MCF 10A (cell line): ENCODE measurements at regions of chr9 and their contacts with region 1.

Region 1: DNA sequence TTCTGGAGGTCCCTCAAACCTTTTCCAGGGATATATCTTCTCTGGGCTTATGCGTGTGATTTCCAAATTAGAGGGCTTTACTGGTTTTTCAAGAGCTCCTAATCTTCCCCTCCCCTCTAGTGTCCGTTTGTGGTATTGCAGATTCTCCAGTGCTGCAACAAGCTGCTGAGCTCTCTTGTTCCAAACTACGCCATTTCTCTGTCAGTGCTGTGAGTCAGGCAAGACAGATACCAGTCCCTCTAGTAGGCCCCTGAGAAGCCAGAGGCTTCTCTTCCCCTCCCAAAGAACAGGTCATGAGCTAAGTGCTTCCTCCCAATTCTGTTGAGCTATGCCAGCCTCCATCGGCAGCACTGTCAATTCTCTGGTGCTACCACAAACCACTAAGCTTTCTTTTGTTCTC is 149.5 kb downstream of the FANCC start:
- DNase-seq: peak; percentile 89
- H3K4me3 Mint-ChIP-seq: no peak overlapping the region
- H3K27ac Mint-ChIP-seq: no peak overlapping the region
- H3K4me1 Mint-ChIP-seq: peaks cover 13% of the 10 kb centered on the region
- H3K27me3 Mint-ChIP-seq: no peaks in the 10 kb centered on the region
- CTCF ChIP-seq: peak; percentile 93

Region 2: GRCh38 chr9:94672811-94673487 is 495.0 kb before region 1 on chr9:
- CTCF ChIA-PET with region 1: interaction called, 14 read pairs
- POLR2A ChIA-PET with region 1: no interaction called
- intact Hi-C with region 1: loop called (anchors 1 kb)
- DNase-seq: peak; percentile 38
- H3K4me3 Mint-ChIP-seq: no peak overlapping the region
- H3K27ac Mint-ChIP-seq: peak overlapping the region; percentile 60
- H3K4me1 Mint-ChIP-seq: peaks cover 24% of the 10 kb centered on the region
- H3K27me3 Mint-ChIP-seq: no peaks in the 10 kb centered on the region
- CTCF ChIP-seq: no peak

Region 3: DNA sequence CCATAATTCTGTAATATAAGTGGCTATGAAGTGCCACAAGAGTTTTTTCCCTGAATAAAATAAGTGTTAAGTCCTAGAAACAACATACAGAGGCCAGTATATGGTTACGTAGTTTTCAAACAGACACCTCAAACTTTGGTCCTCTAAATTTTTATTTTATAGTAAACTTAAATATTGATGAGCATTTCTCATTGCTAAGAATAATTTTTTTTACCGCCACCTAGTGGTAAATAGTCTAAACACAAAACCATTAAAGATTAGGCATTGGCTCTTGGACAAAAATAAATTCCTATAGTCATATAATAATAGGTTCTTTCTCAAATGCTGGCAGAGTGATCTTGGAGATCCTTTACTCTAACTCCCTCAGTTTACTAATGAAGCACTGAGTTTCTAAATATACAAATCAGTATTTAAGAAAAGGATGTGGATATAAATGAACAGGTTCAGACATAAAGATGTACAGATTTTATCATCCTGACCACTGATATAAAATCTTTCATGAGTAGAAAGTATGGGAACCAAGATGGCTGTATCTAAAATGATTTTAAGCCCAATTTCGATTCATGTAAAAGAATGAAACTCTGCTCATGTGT is 13.3 kb after region 1 on chr9:
- CTCF ChIA-PET with region 1: interaction called, 36 read pairs
- POLR2A ChIA-PET with region 1: no interaction called
- intact Hi-C with region 1: no loop called
- DNase-seq: peak; percentile 19
- H3K4me3 Mint-ChIP-seq: no peak overlapping the region
- H3K27ac Mint-ChIP-seq: peak overlapping the region; percentile 39
- H3K4me1 Mint-ChIP-seq: no peaks in the 10 kb centered on the region
- H3K27me3 Mint-ChIP-seq: no peaks in the 10 kb centered on the region
- CTCF ChIP-seq: peak; percentile 32

Region 4: GRCh38 chr9:95494416-95495371 is 326.7 kb after region 1 on chr9:
- CTCF ChIA-PET with region 1: no interaction called
- POLR2A ChIA-PET with region 1: no interaction called
- intact Hi-C with region 1: no loop called
- DNase-seq: no peak
- H3K4me3 Mint-ChIP-seq: no peak overlapping the region
- H3K27ac Mint-ChIP-seq: peak overlapping the region; percentile 39
- H3K4me1 Mint-ChIP-seq: no peaks in the 10 kb centered on the region
- H3K27me3 Mint-ChIP-seq: no peaks in the 10 kb centered on the region
- CTCF ChIP-seq: no peak